GM10248 (cell line): ENCODE measurements at regions of chr3 and their contacts with region 1.

Region 1: GRCh38 chr3:8875836-8876235 is 87.4 kb downstream of the RAD18 start:
- DNase-seq: no peak
- CTCF ChIP-seq: no peak

Region 2: GRCh38 chr3:8733332-8734094 is 142.3 kb before region 1 on chr3 and contains the start of gene CAV3:
- CTCF ChIA-PET with region 1: no interaction called
- POLR2A ChIA-PET with region 1: no interaction called
- DNase-seq: no peak
- CTCF ChIP-seq: no peak

Region 3: DNA sequence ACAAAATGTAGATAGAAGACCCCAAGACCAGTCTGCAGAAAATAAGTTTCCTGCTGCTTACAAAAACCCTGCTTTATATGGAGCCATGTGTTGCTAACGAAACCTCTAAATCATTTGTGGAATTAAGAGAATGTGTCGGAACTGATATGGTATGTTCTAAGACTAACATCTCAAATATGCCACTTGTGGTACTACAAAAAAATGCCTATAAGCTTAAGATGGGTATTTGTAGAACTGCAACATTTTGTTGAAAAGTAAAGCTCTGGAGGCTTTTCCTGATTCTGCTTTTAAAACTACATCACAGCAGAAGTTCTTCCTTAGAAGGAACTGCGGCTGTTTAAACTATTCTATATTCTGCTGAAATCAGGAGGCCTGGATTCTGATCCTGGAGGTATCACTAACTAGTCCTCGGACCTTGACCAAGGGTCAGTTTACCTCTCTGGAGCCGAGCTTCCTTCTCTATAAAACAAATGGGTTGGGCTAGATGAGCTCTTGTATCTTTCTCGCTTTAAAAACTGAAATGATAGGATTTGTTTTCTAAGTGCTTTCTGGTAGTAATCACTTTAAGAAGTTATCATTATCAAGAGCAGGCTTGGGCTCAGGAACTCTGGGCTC is 12.6 kb after region 1 on chr3:
- CTCF ChIA-PET with region 1: interaction called, 25 read pairs
- POLR2A ChIA-PET with region 1: no interaction called
- DNase-seq: no peak
- CTCF ChIP-seq: no peak

Region 4: DNA sequence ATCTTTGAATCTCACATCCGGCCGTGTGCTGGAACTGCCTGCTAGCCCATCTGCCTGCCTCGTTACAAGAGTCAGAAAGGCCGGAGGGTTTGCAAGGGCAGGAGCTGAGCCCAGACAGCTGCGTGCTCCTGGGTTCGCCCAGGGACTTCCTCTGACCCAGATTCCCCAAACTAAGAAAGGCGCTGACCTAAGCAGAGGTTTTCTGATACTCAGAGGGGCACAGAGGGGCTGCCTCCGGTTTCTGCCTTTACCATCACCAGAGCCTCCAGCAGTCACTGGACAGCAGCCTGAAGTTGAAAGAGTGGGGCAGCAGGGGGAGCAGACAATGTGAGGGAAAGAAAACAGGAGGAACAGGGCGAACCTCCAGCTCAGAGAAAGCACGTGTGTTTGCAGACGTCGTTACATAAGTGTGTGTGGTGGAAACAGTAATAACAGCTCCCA is 120.9 kb after region 1 on chr3:
- CTCF ChIA-PET with region 1: no interaction called
- POLR2A ChIA-PET with region 1: no interaction called
- DNase-seq: no peak
- CTCF ChIP-seq: no peak